ENCODE measurements at regions of chr11 and their contacts with region 1.

Region 1: GRCh38 chr11:128956401-128957201 is 13.9 kb upstream of the TP53AIP1 start:
- DNase-seq: no peak
- ATAC-seq: peak; percentile 88
- H3K4me3 Mint-ChIP-seq: no peak overlapping the region
- H3K27ac Mint-ChIP-seq: no peak overlapping the region
- H3K4me1 Mint-ChIP-seq: no peaks in the 10 kb centered on the region
- H3K27me3 Mint-ChIP-seq: peaks cover 12% of the 10 kb centered on the region
- CTCF ChIP-seq: peak; percentile 41

Region 2: DNA sequence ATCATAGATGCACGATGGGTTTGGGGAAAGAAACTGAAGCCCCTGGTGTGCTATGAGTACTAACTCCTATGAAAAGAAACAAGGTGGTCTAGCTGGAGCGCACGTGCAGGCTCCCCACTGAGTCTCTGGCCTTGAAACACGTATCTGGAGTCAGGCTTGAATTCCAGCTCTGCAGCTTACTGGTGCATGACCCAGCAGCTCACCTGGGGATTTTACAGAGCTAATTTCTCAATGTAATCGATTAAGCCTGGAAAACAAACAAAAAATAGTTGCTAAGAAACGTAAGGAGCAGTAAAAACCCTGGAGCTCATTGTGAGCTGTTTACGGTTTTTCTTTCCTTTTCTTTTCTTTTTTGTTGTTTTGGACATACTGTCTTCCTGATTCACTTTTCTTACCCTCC is 101.8 kb before region 1 on chr11:
- CTCF ChIA-PET with region 1: interaction called, 11 read pairs
- POLR2A ChIA-PET with region 1: no interaction called
- DNase-seq: no peak
- ATAC-seq: no peak
- H3K4me3 Mint-ChIP-seq: no peak overlapping the region
- H3K27ac Mint-ChIP-seq: no peak overlapping the region
- H3K4me1 Mint-ChIP-seq: peaks cover 4% of the 10 kb centered on the region; the same call in 1 of the 2 replicates
- H3K27me3 Mint-ChIP-seq: peaks cover 19% of the 10 kb centered on the region
- CTCF ChIP-seq: no peak

Region 3: GRCh38 chr11:128884703-128885338 is 71.8 kb before region 1 on chr11:
- CTCF ChIA-PET with region 1: interaction called, 180 read pairs
- POLR2A ChIA-PET with region 1: interaction called, 3 read pairs
- DNase-seq: peak; percentile 67
- ATAC-seq: peak; percentile 62
- H3K4me3 Mint-ChIP-seq: no peak overlapping the region
- H3K27ac Mint-ChIP-seq: no peak overlapping the region
- H3K4me1 Mint-ChIP-seq: peaks cover 32% of the 10 kb centered on the region
- H3K27me3 Mint-ChIP-seq: peaks cover 75% of the 10 kb centered on the region
- CTCF ChIP-seq: peak; percentile 78

Region 4: GRCh38 chr11:128905345-128906184 is 51.0 kb before region 1 on chr11:
- CTCF ChIA-PET with region 1: interaction called, 54 read pairs
- POLR2A ChIA-PET with region 1: no interaction called
- DNase-seq: peak; percentile 69
- ATAC-seq: peak; percentile 56
- H3K4me3 Mint-ChIP-seq: peak overlapping the region; percentile 70
- H3K27ac Mint-ChIP-seq: no peak overlapping the region
- H3K4me1 Mint-ChIP-seq: peaks cover 40% of the 10 kb centered on the region
- H3K27me3 Mint-ChIP-seq: peaks cover 86% of the 10 kb centered on the region
- CTCF ChIP-seq: peak; percentile 37; the same call in 1 of the 2 replicates

Region 5: GRCh38 chr11:128942817-128943427 is 13.7 kb before region 1 on chr11 and contains the start of gene TP53AIP1:
- CTCF ChIA-PET with region 1: interaction called, 21 read pairs
- POLR2A ChIA-PET with region 1: no interaction called
- DNase-seq: no peak
- ATAC-seq: no peak
- H3K4me3 Mint-ChIP-seq: no peak within 1 kb of the TSS
- H3K27ac Mint-ChIP-seq: no peak within 1 kb of the TSS
- H3K4me1 Mint-ChIP-seq: peaks cover under 1% of the 10 kb centered on the region; the same call in 1 of the 2 replicates
- H3K27me3 Mint-ChIP-seq: peaks cover 31% of the 10 kb centered on the region
- CTCF ChIP-seq: no peak
- total RNA-seq, gene TP53AIP1: 0.07 TPM in 1 of 3 replicates, not detected in the others

Region 6: GRCh38 chr11:129041611-129042018 is 85.0 kb after region 1 on chr11:
- CTCF ChIA-PET with region 1: no interaction called
- POLR2A ChIA-PET with region 1: no interaction called
- DNase-seq: no peak
- ATAC-seq: no peak
- H3K4me3 Mint-ChIP-seq: no peak overlapping the region
- H3K27ac Mint-ChIP-seq: no peak overlapping the region
- H3K4me1 Mint-ChIP-seq: no peaks in the 10 kb centered on the region
- H3K27me3 Mint-ChIP-seq: no peaks in the 10 kb centered on the region
- CTCF ChIP-seq: no peak

Measured in WTC11 (cell line).